Panc1 (cell line): ENCODE measurements at regions of chr6 and their contacts with region 1.

Region 1: DNA sequence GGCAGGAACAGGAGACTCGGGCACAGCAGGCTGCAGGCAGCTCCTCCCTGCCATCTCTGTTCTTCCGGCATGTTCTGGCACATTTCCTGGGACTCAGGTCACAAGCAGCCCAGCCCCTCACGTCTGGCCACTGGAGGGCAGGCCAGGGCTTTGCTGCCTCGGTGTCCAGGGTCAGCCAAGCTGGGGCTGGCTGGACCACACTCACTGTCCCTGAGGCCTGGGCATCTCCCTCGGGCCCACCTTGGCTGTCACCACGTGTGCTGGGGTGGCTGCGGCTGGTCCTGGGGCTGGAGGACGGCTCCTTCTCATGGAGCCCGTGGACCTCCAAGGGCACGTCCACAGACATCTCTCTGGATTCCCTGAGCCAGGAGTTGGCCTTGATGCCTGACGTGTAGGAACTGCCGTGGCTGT is 18.5 kb downstream of the FRMD1 start:
- DNase-seq: no peak
- ATAC-seq: peak; percentile 73
- H3K4me3 ChIP-seq: no peak overlapping the region
- H3K27ac ChIP-seq: no peak overlapping the region
- H3K4me1 ChIP-seq: no peaks in the 10 kb centered on the region
- H3K27me3 ChIP-seq: no peaks in the 10 kb centered on the region
- CTCF ChIP-seq: peak; percentile 86; the same call in 1 of the 2 replicates

Region 2: GRCh38 chr6:168157272-168158007 is 96.9 kb after region 1 on chr6:
- CTCF ChIA-PET with region 1: interaction called, 10 read pairs
- POLR2A ChIA-PET with region 1: interaction called, 4 read pairs
- in situ Hi-C with region 1: no loop called
- intact Hi-C with region 1: no loop called
- DNase-seq: peak; percentile 68
- ATAC-seq: peak; percentile 87
- H3K4me3 ChIP-seq: peak overlapping the region in 1 of 2 experiments; percentile 54; a peak in 2 of 4 replicates
- H3K27ac ChIP-seq: peak overlapping the region; percentile 85
- H3K4me1 ChIP-seq: peaks cover 33% of the 10 kb centered on the region
- H3K27me3 ChIP-seq: no peaks in the 10 kb centered on the region
- CTCF ChIP-seq: no peak